HCT116 (cell line): ENCODE measurements at regions of chr11 and their contacts with region 1.

Region 1: GRCh38 chr11:74570266-74571061 is 21.9 kb upstream of the POLD3 start:
- DNase-seq: peak; percentile 48
- ATAC-seq: peak; percentile 95
- H3K4me3 ChIP-seq: no peak overlapping the region
- H3K27ac ChIP-seq: no peak overlapping the region
- H3K4me1 ChIP-seq: no peaks in the 10 kb centered on the region
- H3K27me3 ChIP-seq: no peaks in the 10 kb centered on the region
- CTCF ChIP-seq: peak; percentile 70 to 95 (median 88)
- POLR2A ChIP-seq: no peak
- RAD21 ChIP-seq: peak; percentile 94

Region 2: GRCh38 chr11:74449369-74449931 is 121.0 kb before region 1 on chr11:
- CTCF ChIA-PET with region 1: interaction called, 120 read pairs
- POLR2A ChIA-PET with region 1: interaction called, 5 read pairs
- RAD21 ChIA-PET with region 1: interaction called, 15 to 25 read pairs
- intact Hi-C with region 1: loop called (anchors 1 kb)
- DNase-seq: peak; percentile 57
- ATAC-seq: peak; percentile 82
- H3K4me3 ChIP-seq: no peak overlapping the region
- H3K27ac ChIP-seq: no peak overlapping the region
- H3K4me1 ChIP-seq: peaks cover 0 to 3% of the 10 kb centered on the region in 2 experiments; a peak in 1 of 4 replicates
- H3K27me3 ChIP-seq: no peaks in the 10 kb centered on the region
- CTCF ChIP-seq: peak; percentile 68 to 79 (median 74)
- POLR2A ChIP-seq: no peak
- RAD21 ChIP-seq: peak; percentile 96

Region 3: GRCh38 chr11:74487875-74488274 is 82.6 kb before region 1 on chr11:
- CTCF ChIA-PET with region 1: interaction called, 16 read pairs
- POLR2A ChIA-PET with region 1: interaction called, 3 read pairs
- RAD21 ChIA-PET with region 1: interaction called, 3 to 5 read pairs
- intact Hi-C with region 1: loop called (anchors 1 kb)
- DNase-seq: peak; percentile 32
- ATAC-seq: peak; percentile 88
- H3K4me3 ChIP-seq: no peak overlapping the region
- H3K27ac ChIP-seq: no peak overlapping the region
- H3K4me1 ChIP-seq: peaks cover 5 to 12% of the 10 kb centered on the region in 2 experiments
- H3K27me3 ChIP-seq: no peaks in the 10 kb centered on the region
- CTCF ChIP-seq: peak; percentile 56 to 61 (median 56); a peak in 5 of 6 replicates
- POLR2A ChIP-seq: no peak
- RAD21 ChIP-seq: peak; percentile 66